ENCODE measurements at regions of chr9 and their contacts with region 1.

Region 1: GRCh38 chr9:35071814-35072460 is 488 bp downstream of the VCP start:
- DNase-seq: peak; percentile 84
- H3K4me3 Mint-ChIP-seq: peak overlapping the region; percentile 92
- H3K27ac Mint-ChIP-seq: peak overlapping the region; percentile 92
- H3K4me1 Mint-ChIP-seq: peaks cover 22% of the 10 kb centered on the region
- H3K27me3 Mint-ChIP-seq: no peaks in the 10 kb centered on the region
- CTCF ChIP-seq: no peak

Region 2: DNA sequence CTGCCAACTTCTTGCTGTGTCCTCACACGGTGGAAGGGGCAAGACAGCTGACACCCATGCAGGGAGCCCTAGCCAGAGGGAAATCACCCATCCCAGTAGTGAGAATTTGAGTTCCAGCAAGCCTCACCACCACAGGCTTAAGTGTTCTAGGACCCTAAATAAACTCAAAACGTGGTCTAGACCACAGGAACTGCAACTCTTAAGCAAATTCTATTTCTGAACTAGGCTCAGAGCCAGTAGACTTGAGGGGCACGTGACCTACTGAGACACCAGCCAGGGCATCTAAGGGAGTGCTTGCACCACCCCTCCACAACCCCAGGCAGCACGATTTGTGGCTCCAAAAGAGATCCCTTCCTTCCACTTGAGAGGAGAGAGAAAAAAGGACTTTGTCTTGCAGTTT is 209.9 kb before region 1 on chr9:
- CTCF ChIA-PET with region 1: no interaction called
- POLR2A ChIA-PET with region 1: no interaction called
- intact Hi-C with region 1: no loop called
- DNase-seq: no peak
- H3K4me3 Mint-ChIP-seq: no peak overlapping the region
- H3K27ac Mint-ChIP-seq: no peak overlapping the region
- H3K4me1 Mint-ChIP-seq: no peaks in the 10 kb centered on the region
- H3K27me3 Mint-ChIP-seq: no peaks in the 10 kb centered on the region
- CTCF ChIP-seq: no peak

Region 3: DNA sequence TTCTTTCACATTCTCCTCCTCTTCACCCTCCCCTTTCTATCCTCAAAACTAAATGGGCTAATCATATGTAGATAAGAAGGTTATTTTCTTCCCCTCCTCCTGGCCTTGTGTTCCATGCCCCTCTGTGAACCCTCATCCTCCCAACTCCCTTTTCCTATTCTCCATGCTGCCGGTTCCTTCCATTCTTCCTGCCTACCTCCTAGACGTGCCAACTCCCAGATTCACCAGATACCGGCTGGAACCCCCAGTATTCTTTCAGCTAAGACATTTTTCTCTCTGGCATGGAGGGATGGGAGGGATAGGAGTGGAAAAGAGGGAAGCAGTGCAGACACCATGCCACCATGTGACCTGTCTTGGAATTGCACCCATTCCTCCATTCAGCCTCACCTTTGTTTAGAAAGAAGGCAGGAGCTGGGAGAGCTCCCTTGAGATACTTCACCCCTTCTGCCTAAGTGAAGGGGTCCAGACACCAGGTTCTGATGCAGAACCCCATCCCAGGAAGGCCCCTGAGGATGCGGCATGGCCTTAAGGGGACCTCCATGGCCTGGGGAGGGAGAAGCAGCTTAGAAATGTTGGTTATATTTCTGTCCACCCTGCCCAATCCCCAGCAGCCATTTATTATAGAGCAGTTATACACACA is 77.6 kb before region 1 on chr9:
- CTCF ChIA-PET with region 1: interaction called, 4 read pairs
- POLR2A ChIA-PET with region 1: interaction called, 18 read pairs
- intact Hi-C with region 1: no loop called
- DNase-seq: peak; percentile 77
- H3K4me3 Mint-ChIP-seq: no peak overlapping the region
- H3K27ac Mint-ChIP-seq: no peak overlapping the region
- H3K4me1 Mint-ChIP-seq: peaks cover 38% of the 10 kb centered on the region
- H3K27me3 Mint-ChIP-seq: no peaks in the 10 kb centered on the region
- CTCF ChIP-seq: peak; percentile 76

Region 4: DNA sequence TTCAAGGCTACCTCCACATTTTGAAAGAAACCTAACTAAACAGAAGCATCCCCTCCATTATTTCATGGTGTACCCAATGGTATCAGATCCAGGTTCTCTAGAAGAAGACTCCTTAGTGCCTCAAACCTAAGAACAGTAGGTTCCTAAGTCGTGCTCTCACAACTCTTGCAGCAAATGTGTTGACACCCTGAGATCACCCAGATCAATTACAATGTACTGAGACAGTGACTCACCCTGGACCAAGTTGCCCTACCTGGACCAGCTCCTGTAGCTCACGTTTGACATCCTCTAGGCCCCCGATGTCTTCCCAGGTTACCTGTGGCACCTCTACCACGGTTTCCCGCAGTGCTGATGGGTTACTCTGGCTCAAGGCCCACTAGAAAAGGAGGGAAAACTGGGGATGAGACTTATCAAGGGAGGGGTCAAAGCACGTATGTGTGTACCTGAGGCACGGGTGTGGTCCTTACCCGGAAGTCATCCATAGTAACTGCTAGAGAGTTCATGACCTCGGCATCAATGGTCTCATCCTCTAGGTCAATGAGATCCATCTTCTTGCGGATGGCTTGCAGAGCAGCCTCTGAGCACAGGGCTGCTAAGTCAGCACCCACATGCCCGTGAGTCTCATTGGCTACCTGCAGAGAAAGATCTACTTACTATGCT is 11.3 kb before region 1 on chr9:
- CTCF ChIA-PET with region 1: interaction called, 3 read pairs
- POLR2A ChIA-PET with region 1: interaction called, 14 read pairs
- intact Hi-C with region 1: no loop called
- DNase-seq: no peak
- H3K4me3 Mint-ChIP-seq: no peak overlapping the region
- H3K27ac Mint-ChIP-seq: no peak overlapping the region
- H3K4me1 Mint-ChIP-seq: no peaks in the 10 kb centered on the region
- H3K27me3 Mint-ChIP-seq: no peaks in the 10 kb centered on the region
- CTCF ChIP-seq: no peak

Region 5: DNA sequence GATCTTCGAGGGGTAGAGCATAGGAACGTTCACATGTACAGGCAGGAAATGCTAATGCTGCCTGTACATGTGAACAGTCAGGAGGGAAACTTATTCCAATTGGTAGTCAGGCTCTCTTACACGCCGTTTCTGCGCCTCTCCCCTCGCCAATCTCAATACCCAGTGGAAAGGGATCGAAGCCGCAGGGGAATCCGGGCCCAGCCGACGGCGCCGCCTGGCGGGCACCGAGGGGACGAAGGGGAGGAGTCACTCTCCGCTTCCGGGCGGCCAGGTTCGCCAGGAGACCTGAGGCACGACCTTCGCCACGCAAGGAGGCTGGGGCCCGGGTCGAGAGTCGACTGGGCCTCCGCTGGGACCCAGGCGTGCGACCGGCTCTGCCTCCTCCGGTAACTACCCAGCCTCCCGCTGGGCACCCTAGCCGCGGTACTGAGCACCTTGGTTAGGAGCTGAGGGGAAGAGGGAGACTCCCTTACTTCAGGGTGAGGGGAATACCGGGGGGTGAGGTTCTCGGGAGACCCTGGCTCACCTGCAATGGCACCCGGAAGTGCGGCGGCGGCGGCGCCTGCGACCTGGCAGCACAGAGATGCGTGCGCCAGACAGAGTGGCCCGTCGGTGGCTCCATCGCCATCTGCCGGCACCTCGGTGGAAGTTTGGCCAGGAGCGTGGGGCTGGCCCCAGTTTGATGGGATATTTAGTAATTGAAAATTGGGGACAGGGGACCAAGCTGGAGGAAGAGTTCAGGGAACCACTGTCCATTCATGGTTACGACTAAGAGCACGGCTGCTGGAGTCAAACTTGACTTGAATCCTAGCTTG is 24.3 kb after region 1 on chr9 and contains the start of gene PIGO:
- CTCF ChIA-PET with region 1: interaction called, 23 read pairs
- POLR2A ChIA-PET with region 1: interaction called, 85 read pairs
- intact Hi-C with region 1: loop called (anchors 2 kb)
- DNase-seq: peak; percentile 85
- H3K4me3 Mint-ChIP-seq: peak within 1 kb of the TSS; percentile 85
- H3K27ac Mint-ChIP-seq: peak within 1 kb of the TSS; percentile 95
- H3K4me1 Mint-ChIP-seq: peaks cover 15% of the 10 kb centered on the region
- H3K27me3 Mint-ChIP-seq: no peaks in the 10 kb centered on the region
- CTCF ChIP-seq: peak; percentile 49
- total RNA-seq, gene PIGO: 34.8 and 39.2 TPM in 2 replicates

Region 6: DNA sequence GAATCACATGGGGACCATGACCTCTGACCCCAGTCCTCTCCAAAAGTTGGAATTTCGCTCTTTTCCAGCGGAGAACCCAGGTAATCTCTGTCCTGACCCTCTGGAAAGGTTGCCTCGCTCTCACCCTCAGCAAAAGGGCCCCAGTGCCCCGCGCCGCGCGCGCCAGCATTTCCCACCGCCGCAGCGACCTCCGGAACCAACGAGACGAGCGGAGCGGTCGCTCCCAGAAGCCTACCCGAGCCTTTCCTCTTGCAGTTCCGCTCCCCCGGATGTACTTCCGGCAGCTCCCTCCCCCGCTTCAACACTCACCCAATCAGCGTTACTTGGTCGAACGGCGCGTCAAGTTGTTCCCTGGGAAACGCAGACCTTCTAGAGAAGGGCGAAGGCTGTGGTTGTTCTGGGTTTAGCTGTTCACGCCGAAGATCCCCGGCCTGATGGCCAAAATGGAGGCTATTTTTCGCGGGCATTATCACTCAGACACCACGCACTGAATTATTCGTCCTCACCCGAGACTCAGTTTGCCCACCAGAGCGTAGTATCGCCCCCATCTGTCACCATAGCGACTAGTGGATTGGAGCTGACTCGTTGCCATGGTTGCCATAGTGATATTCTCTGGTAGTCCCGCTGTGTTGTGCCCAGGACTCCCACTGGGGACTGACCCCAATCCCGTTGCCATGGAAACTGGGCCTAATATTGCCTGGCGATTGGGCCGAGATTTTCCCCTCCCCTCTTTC is 31.2 kb after region 1 on chr9 and contains the start of gene STOML2:
- CTCF ChIA-PET with region 1: interaction called, 3 read pairs
- POLR2A ChIA-PET with region 1: interaction called, 85 read pairs
- intact Hi-C with region 1: no loop called
- DNase-seq: peak; percentile 95
- H3K4me3 Mint-ChIP-seq: peak within 1 kb of the TSS; percentile 99
- H3K27ac Mint-ChIP-seq: peak within 1 kb of the TSS; percentile 99
- H3K4me1 Mint-ChIP-seq: peaks cover 19% of the 10 kb centered on the region
- H3K27me3 Mint-ChIP-seq: no peaks in the 10 kb centered on the region
- CTCF ChIP-seq: no peak
- total RNA-seq, gene STOML2: 203 and 209 TPM in 2 replicates

Region 7: GRCh38 chr9:35111001-35111933 is 39.3 kb after region 1 on chr9:
- CTCF ChIA-PET with region 1: interaction called, 3 read pairs
- POLR2A ChIA-PET with region 1: interaction called, 20 read pairs
- intact Hi-C with region 1: no loop called
- DNase-seq: peak; percentile 98
- H3K4me3 Mint-ChIP-seq: peak overlapping the region; percentile 87
- H3K27ac Mint-ChIP-seq: peak overlapping the region; percentile 96
- H3K4me1 Mint-ChIP-seq: peaks cover 50% of the 10 kb centered on the region
- H3K27me3 Mint-ChIP-seq: no peaks in the 10 kb centered on the region
- CTCF ChIP-seq: no peak